GM23248 (cell line): ENCODE measurements at regions of chr5 and their contacts with region 1.

Region 1: GRCh38 chr5:146541958-146542849 is 26.2 kb upstream of the GPR151 start:
- DNase-seq: peak; percentile 78
- H3K4me3 ChIP-seq: no peak overlapping the region
- H3K27ac ChIP-seq: no peak overlapping the region
- H3K4me1 ChIP-seq: no peaks in the 10 kb centered on the region
- H3K27me3 ChIP-seq: no peaks in the 10 kb centered on the region; the same call in 1 of the 2 replicates

Region 2: DNA sequence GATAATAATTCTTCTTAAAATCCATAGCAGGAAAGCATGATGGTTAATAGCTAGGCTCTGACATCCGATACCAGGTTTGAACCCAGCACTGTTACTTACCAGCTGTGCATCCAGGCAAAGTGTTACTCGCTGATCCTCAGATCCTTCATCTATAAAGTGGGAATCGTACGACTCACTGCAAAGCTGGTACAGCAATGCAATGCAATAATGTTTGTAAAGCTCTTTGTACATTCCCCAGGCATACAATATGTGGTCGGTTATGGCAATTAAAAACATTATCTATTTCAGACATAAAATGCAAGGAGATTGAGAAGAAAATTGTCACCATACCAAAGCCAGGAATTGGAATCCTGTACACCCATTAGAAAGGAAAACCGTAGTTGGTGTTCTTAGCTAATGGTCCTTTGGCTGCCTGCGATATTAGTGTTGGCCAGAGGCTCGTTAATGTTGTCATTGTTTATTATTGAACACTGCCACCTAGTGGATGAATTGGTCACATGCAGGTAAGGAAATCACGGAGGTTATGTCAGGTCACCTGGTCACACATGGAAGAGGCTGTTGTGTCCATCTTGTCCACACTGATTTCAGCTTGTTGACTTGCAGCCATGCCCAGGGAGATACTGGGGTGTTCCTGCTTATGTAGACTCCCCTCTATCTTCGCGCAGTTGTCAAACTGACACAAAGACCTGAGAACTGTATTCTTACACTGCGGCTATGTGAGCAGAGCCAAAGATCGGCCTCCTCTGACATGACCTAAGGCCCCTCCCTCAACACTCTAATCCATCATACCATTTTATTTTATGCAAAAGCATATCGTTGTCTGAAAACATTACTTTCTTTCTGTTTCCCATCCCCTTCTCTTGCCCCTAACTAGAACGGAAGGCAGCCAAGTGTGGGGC is 423.8 kb after region 1 on chr5:
- in situ Hi-C with region 1: loop called (anchors 5 kb)
- DNase-seq: peak; percentile 82
- H3K4me3 ChIP-seq: no peak overlapping the region
- H3K27ac ChIP-seq: no peak overlapping the region
- H3K4me1 ChIP-seq: no peaks in the 10 kb centered on the region
- H3K27me3 ChIP-seq: no peaks in the 10 kb centered on the region; the same call in 1 of the 2 replicates

Region 3: GRCh38 chr5:147190331-147190730 is 648.1 kb after region 1 on chr5:
- in situ Hi-C with region 1: loop called (anchors 10 kb)
- DNase-seq: peak; percentile 19
- H3K4me3 ChIP-seq: no peak overlapping the region
- H3K27ac ChIP-seq: no peak overlapping the region
- H3K4me1 ChIP-seq: no peaks in the 10 kb centered on the region
- H3K27me3 ChIP-seq: no peaks in the 10 kb centered on the region

Region 4: DNA sequence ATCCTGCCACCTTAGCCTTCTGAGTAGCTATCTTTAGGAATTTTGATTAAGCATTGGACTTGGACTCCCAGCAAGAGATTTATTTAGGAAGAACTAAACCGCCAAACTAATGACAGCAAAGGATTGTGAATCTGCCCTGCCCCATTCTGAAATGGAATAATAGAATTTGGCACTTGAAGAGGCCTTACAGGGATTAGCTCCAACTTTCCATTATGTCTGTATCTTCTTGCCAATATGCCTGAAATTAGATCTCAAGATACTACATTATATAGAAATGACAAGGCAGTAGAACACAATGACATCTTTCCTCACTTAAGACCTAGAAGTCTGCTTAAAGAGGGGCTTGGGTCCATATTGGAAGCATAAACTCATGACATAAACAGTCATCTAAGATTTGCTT is 1044.6 kb after region 1 on chr5:
- in situ Hi-C with region 1: no loop called
- DNase-seq: no peak
- H3K4me3 ChIP-seq: no peak overlapping the region
- H3K27ac ChIP-seq: no peak overlapping the region
- H3K4me1 ChIP-seq: no peaks in the 10 kb centered on the region
- H3K27me3 ChIP-seq: peaks cover 13% of the 10 kb centered on the region; the same call in 1 of the 2 replicates